Activated CD4-positive, alpha-beta memory T cell treated with anti-CD3 and anti-CD28 coated beads for 36 hours (primary cell): ENCODE measurements at regions of chr10 and their contacts with region 1.

Region 1: DNA sequence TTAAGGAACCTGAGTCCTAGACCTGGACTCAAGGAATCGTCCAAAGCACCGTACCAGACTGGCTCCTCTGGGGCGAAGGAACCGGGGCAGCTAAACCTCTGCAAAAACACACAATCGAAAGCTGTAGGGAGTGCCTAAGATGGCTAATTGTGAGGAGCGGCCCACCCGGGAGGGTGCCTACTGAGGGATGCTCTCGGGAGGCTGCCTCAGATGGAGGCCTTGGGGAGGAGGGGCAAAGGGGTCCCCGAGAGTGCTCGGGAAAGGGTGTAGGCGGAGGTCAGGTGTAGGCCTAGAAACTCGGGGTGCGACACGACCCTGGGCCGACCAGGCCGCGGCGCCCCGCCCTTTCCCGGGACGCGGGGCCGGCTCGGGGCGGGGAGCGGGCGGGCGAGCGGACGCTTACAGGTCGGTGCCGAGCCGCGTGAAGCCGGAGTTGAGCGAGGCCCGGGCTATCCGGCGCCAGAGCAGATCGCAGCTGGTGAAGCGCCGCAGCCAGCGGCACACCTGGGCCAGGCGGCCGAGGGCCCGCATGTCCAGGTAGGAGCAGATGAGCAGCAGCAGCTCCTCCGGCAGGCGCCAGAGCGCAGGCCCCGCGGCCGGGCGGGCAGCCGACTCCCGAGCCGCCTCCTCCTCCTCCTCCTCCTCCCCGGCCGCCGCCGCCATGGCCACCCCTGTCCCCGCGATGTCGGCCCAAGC is 844 bp downstream of the FBXW4 start:
- DNase-seq: peak; percentile 74
- H3K4me3 Mint-ChIP-seq: peak overlapping the region; percentile 95
- H3K27ac Mint-ChIP-seq: peak overlapping the region; percentile 97
- H3K4me1 Mint-ChIP-seq: peaks cover 36% of the 10 kb centered on the region
- H3K27me3 Mint-ChIP-seq: no peaks in the 10 kb centered on the region

Region 2: DNA sequence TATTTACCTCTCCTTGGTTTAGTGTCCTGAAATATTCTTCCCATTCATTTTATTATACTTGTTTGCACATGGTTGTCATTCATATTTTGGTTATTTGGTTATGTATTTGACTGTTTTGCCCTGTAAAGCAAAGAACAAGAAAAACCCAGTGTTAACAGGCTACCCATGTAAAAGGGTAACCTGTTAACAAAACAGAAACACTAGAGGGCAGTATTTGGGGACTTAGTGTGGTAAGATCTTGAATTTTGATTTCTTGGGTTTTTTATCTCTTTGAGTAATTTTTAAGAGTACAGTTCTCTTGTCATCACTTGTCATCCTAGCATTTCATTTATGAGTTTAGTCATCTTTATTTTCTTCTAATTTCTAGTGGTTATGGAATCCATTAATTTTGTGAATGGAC is 157.3 kb before region 1 on chr10:
- CTCF ChIA-PET with region 1: no interaction called
- POLR2A ChIA-PET with region 1: no interaction called
- intact Hi-C with region 1: no loop called
- DNase-seq: no peak
- H3K4me3 Mint-ChIP-seq: no peak overlapping the region
- H3K27ac Mint-ChIP-seq: no peak overlapping the region
- H3K4me1 Mint-ChIP-seq: no peaks in the 10 kb centered on the region
- H3K27me3 Mint-ChIP-seq: no peaks in the 10 kb centered on the region

Region 3: GRCh38 chr10:101818119-101818871 is 124.2 kb after region 1 on chr10 and contains the start of gene OGA:
- CTCF ChIA-PET with region 1: no interaction called
- POLR2A ChIA-PET with region 1: interaction called, 7 read pairs
- intact Hi-C with region 1: loop called (anchors 2 kb)
- DNase-seq: peak; percentile 99
- H3K4me3 Mint-ChIP-seq: peak within 1 kb of the TSS; percentile 97
- H3K27ac Mint-ChIP-seq: peak within 1 kb of the TSS; percentile 97
- H3K4me1 Mint-ChIP-seq: peaks cover 39% of the 10 kb centered on the region
- H3K27me3 Mint-ChIP-seq: no peaks in the 10 kb centered on the region
- total RNA-seq, gene OGA: 93.2 to 105 TPM

Region 4: GRCh38 chr10:102641880-102642735 is 948.0 kb after region 1 on chr10:
- CTCF ChIA-PET with region 1: no interaction called
- POLR2A ChIA-PET with region 1: no interaction called
- intact Hi-C with region 1: no loop called
- DNase-seq: peak; percentile 99
- H3K4me3 Mint-ChIP-seq: peak overlapping the region; percentile 87
- H3K27ac Mint-ChIP-seq: peak overlapping the region; percentile 95
- H3K4me1 Mint-ChIP-seq: peaks cover 17% of the 10 kb centered on the region
- H3K27me3 Mint-ChIP-seq: no peaks in the 10 kb centered on the region